Caco-2 (cell line): ENCODE measurements at regions of chr11 and their contacts with region 1.

Region 1: GRCh38 chr11:128905345-128906184 is 14.4 kb downstream of the KCNJ5 start:
- DNase-seq: peak; percentile 78 to 80
- H3K4me3 ChIP-seq: peak overlapping the region; percentile 35
- H3K4me3 Mint-ChIP-seq: peak overlapping the region; percentile 70
- H3K27ac Mint-ChIP-seq: peak overlapping the region; percentile 3
- H3K4me1 ChIP-seq: peaks cover 6% of the 10 kb centered on the region
- H3K4me1 Mint-ChIP-seq: peaks cover 6% of the 10 kb centered on the region
- H3K27me3 ChIP-seq: no peaks in the 10 kb centered on the region; the same call in 1 of the 2 replicates
- H3K27me3 Mint-ChIP-seq: peaks cover 7% of the 10 kb centered on the region
- CTCF ChIP-seq: peak; percentile 79 to 84

Region 2: GRCh38 chr11:128802358-128802981 is 103.1 kb before region 1 on chr11:
- CTCF ChIA-PET with region 1: no interaction called
- POLR2A ChIA-PET with region 1: no interaction called
- intact Hi-C with region 1: no loop called
- DNase-seq: peak in 1 of 2 experiments; percentile 51
- H3K4me3 ChIP-seq: no peak overlapping the region
- H3K4me3 Mint-ChIP-seq: no peak overlapping the region
- H3K27ac Mint-ChIP-seq: no peak overlapping the region
- H3K4me1 ChIP-seq: no peaks in the 10 kb centered on the region
- H3K4me1 Mint-ChIP-seq: peaks cover 7% of the 10 kb centered on the region
- H3K27me3 ChIP-seq: no peaks in the 10 kb centered on the region
- H3K27me3 Mint-ChIP-seq: peaks cover 36% of the 10 kb centered on the region
- CTCF ChIP-seq: peak; percentile 66 to 81

Region 3: DNA sequence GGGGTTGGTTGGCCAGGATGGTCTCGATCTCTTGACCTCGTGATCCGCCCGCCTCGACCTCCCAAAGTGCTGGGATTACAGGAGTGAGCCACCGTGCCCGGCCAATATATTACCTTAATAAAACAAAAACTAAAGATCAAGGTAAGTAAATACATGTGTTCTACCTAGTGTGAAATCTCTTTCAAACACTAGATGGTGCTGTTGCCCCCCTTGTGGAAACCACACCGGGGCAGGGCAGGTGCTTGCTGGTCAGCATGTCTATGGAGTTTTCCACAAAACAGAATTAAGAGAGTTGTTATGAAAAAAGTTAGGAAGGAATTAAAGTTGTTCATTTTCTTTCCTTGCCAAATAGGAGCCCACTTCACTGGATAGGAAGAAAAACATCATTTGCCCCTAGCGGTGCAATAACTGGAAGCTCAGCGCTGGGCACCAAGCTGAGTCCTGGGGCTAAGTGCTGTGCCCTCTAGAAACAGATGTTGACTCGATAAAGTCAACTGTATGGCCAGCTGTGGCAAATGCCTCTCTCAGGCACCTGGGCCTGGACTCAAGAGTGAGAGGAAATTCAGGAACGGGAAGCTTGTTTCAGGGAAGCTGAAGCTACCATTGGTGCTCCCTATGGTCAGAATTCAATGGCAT is 20.7 kb before region 1 on chr11:
- CTCF ChIA-PET with region 1: interaction called, 38 read pairs
- POLR2A ChIA-PET with region 1: no interaction called
- intact Hi-C with region 1: loop called (anchors 1 kb)
- DNase-seq: peak; percentile 78 to 91
- H3K4me3 ChIP-seq: no peak overlapping the region
- H3K4me3 Mint-ChIP-seq: no peak overlapping the region
- H3K27ac Mint-ChIP-seq: no peak overlapping the region
- H3K4me1 ChIP-seq: no peaks in the 10 kb centered on the region; the same call in 1 of the 2 replicates
- H3K4me1 Mint-ChIP-seq: no peaks in the 10 kb centered on the region
- H3K27me3 ChIP-seq: no peaks in the 10 kb centered on the region; the same call in none of the 2 replicates
- H3K27me3 Mint-ChIP-seq: peaks cover 33% of the 10 kb centered on the region
- CTCF ChIP-seq: peak; percentile 96 to 97

Region 4: GRCh38 chr11:128890543-128891368 is 14.8 kb before region 1 on chr11 and contains the start of gene KCNJ5:
- CTCF ChIA-PET with region 1: interaction called, 38 read pairs
- POLR2A ChIA-PET with region 1: interaction called, 3 read pairs
- intact Hi-C with region 1: loop called (anchors 1 kb)
- DNase-seq: peak in 1 of 2 experiments; percentile 70
- H3K4me3 ChIP-seq: peak within 1 kb of the TSS; percentile 36
- H3K4me3 Mint-ChIP-seq: peak within 1 kb of the TSS; percentile 76
- H3K27ac Mint-ChIP-seq: no peak within 1 kb of the TSS
- H3K4me1 ChIP-seq: peaks cover 10% of the 10 kb centered on the region
- H3K4me1 Mint-ChIP-seq: no peaks in the 10 kb centered on the region
- H3K27me3 ChIP-seq: peaks cover 1% of the 10 kb centered on the region
- H3K27me3 Mint-ChIP-seq: peaks cover 17% of the 10 kb centered on the region
- CTCF ChIP-seq: no peak
- total RNA-seq, gene KCNJ5: not detected in 2 replicates